Gastrocnemius medialis (tissue), 4 donors: ENCODE measurements at regions of chr1 and their contacts with region 1.

Region 1: DNA sequence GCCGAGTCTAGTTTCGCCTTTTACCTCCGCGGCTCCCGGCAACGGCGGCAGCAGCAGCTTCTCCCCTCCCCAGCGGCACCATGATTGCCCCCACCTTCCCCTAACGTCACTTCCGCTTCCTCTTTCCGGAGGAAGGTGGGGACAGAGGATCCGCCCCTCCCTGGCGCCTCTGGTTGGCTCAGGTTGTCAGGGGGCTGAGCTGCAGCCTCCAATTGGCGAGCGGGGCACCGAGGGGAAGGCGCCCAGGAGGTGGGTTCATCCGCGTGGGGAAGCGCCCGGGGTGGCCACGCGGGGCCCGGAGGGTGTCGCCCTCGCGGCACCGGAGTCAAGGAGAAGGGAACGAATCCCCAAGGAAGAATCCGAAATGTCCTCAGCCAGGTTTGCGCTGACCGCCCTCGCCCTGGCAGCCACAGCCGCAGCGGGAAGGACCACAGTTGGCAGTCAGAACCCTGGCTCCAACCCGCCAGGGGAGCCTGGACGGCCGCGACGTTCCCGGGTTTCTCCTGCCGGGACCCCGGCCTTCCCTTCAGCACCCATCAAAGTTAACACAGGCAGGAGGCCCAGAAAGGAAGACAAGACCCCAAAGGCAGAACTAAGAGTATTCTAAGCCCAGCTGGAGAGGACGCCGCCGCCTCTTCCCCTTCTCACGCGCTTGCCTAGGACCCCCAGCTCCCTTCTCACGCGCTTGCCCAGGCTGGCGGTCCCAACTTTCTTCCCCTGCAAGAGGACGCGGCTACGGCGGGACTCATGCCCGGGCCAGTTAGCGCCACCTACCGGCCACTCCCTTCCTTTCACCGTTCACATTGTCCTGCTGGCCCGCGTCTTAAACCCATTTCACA is at the start of gene MTF1:
- DNase-seq: peak; percentile 98
- ATAC-seq: peak; percentile 94 to 96
- H3K4me3 ChIP-seq: peak within 1 kb of the TSS; percentile 80 to 96 (median 90)
- H3K27ac ChIP-seq: peak within 1 kb of the TSS; percentile 92 to 99 (median 96)
- H3K4me1 ChIP-seq: peaks cover 30 to 34% of the 10 kb centered on the region in 2 donors
- H3K27me3 ChIP-seq: no peaks in the 10 kb centered on the region
- CTCF ChIP-seq: peak; percentile 88 to 95 (median 92)
- POLR2A ChIP-seq: peak; percentile 85 to 94
- total RNA-seq, gene MTF1: 4.0 to 9.4 (median 6.4) TPM

Region 2: GRCh38 chr1:37449936-37450335 is 409.8 kb before region 1 on chr1:
- in situ Hi-C with region 1: no loop called
- intact Hi-C with region 1: no loop called
- DNase-seq: no peak
- ATAC-seq: no peak
- H3K4me3 ChIP-seq: no peak overlapping the region
- H3K27ac ChIP-seq: no peak overlapping the region
- H3K4me1 ChIP-seq: peaks cover 0 to under 1% of the 10 kb centered on the region in 2 donors
- H3K27me3 ChIP-seq: peaks cover 34 to 35% (median 34%) of the 10 kb centered on the region in 3 donors
- CTCF ChIP-seq: no peak
- POLR2A ChIP-seq: no peak

Region 3: GRCh38 chr1:37479255-37480124 is 380.2 kb before region 1 on chr1:
- in situ Hi-C with region 1: no loop called
- intact Hi-C with region 1: loop called (anchors 5 kb)
- DNase-seq: peak; percentile 95 to 98
- ATAC-seq: peak; percentile 54 to 69
- H3K4me3 ChIP-seq: peak overlapping the region; percentile 55 to 94 (median 78)
- H3K27ac ChIP-seq: peak overlapping the region; percentile 89 to 98 (median 97)
- H3K4me1 ChIP-seq: peaks cover 53 to 54% of the 10 kb centered on the region in 2 donors
- H3K27me3 ChIP-seq: no peaks in the 10 kb centered on the region
- CTCF ChIP-seq: no peak
- POLR2A ChIP-seq: peak; percentile 62 to 68

Region 4: DNA sequence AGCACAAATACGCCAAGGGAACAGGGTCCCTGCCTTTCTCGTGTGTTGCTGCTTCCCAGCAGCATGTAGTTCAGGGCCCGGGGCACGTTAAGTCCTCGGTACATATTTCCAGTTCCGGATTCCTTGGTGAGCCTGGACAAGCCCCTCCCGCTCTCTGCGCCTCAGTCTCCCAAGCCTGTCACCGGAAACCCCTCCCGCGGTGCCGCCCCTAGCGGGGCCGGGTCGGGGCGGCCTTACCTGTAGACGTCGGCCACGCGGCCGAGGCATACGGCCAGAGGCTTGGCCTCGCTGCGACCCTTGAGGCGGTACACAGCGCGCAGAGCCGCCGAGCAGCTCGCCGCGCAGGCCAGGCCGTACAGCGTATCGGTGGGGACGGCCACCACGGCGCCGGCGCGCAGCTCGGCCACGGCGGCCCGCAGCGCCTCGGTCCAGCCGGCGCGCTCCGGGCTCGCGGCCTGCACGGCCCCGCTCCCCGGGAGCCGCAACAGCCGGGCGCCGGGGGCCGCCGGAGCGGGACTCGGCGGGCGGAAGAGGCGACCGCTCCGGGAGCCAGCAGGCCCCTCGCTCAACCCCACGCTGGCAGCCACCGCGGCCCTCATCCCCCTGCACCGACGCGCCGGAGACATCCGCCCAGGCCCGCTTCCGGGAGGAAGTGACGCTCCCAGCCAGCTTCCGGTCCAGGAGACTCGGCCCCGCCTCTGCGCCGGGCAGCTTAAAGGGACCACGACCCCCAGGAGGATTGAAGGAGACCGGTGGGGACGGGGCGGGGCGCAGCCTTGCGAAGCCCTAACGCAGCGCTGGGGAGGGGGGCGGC is 52.0 kb before region 1 on chr1 and contains the starts of genes C1orf122 and YRDC:
- in situ Hi-C with region 1: loop called in 2 of 4 experiments (anchors 5 to 10 kb)
- intact Hi-C with region 1: loop called (anchors 1 kb)
- DNase-seq: peak; percentile 90 to 92
- ATAC-seq: peak; percentile 85 to 94
- H3K4me3 ChIP-seq: peak within 1 kb of the TSS; percentile 74 to 93 (median 87)
- H3K27ac ChIP-seq: peak within 1 kb of the TSS; percentile 89 to 98 (median 96)
- H3K4me1 ChIP-seq: peaks cover 29 to 34% of the 10 kb centered on the region in 2 donors
- H3K27me3 ChIP-seq: no peaks in the 10 kb centered on the region
- CTCF ChIP-seq: no peak
- POLR2A ChIP-seq: peak; percentile 89 to 93
- total RNA-seq, gene C1orf122: 41.2 to 96.0 (median 56.8) TPM
- total RNA-seq, gene YRDC: 11.2 to 13.6 (median 11.7) TPM

Region 5: GRCh38 chr1:37822906-37823815 is 36.6 kb before region 1 on chr1:
- in situ Hi-C with region 1: no loop called
- intact Hi-C with region 1: no loop called
- DNase-seq: no peak
- ATAC-seq: no peak
- H3K4me3 ChIP-seq: no peak overlapping the region
- H3K27ac ChIP-seq: no peak overlapping the region
- H3K4me1 ChIP-seq: no peaks in the 10 kb centered on the region
- H3K27me3 ChIP-seq: no peaks in the 10 kb centered on the region
- CTCF ChIP-seq: no peak
- POLR2A ChIP-seq: no peak

Region 6: GRCh38 chr1:38865112-38865715 is 1005.5 kb after region 1 on chr1:
- in situ Hi-C with region 1: no loop called
- intact Hi-C with region 1: no loop called
- DNase-seq: no peak
- ATAC-seq: no peak
- H3K4me3 ChIP-seq: no peak overlapping the region
- H3K27ac ChIP-seq: no peak overlapping the region
- H3K4me1 ChIP-seq: peaks cover 30 to 41% of the 10 kb centered on the region in 2 donors
- H3K27me3 ChIP-seq: no peaks in the 10 kb centered on the region
- CTCF ChIP-seq: no peak
- POLR2A ChIP-seq: no peak